B cell (primary cell): ENCODE measurements at regions of chr17 and their contacts with region 1.

Region 1: DNA sequence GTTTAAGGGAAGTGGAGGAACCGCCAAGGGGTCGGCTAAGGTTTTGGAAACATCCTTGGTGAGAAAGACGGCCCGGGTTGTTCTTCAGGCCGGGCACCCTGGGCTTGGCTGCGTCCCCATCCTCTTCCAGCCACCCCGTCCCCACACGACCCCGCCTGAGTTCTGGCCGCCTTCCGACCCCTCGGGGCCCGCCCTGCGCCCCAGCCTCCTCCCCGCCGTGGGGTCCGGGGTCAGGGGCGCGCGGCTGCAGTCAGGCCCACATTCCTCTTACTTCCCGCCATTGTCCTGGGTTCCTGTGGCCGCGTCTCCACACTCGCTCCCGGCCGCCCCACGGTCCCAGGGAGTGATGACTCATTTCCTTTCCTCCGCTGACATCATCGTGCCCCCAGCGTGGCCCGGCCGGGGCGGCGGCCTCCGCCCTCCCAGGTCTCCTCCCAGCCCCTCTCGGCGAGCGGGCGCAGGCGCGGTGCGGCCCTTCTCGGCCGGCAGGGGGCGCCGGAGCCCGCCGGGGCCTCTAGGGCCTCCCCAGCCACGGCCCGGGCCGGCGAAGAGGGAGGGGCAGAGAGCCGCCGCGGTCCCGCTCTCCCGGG is 59.6 kb downstream of the WSB1 start:
- DNase-seq: peak; percentile 90
- ATAC-seq: peak; percentile 82
- H3K4me3 ChIP-seq: peak overlapping the region in 4 of 5 experiments; percentile 62 to 78 (median 72)
- H3K4me3 Mint-ChIP-seq: peak overlapping the region; percentile 73
- H3K27ac ChIP-seq: peak overlapping the region; percentile 60 to 89
- H3K27ac Mint-ChIP-seq: peak overlapping the region; percentile 91
- H3K4me1 ChIP-seq: peaks cover 13 to 19% of the 10 kb centered on the region in 2 donors
- H3K4me1 Mint-ChIP-seq: peaks cover 19% of the 10 kb centered on the region
- H3K27me3 ChIP-seq: no peaks in the 10 kb centered on the region
- H3K27me3 Mint-ChIP-seq: no peaks in the 10 kb centered on the region
- CTCF ChIP-seq: peak; percentile 90

Region 2: GRCh38 chr17:27293898-27294688 is 59.5 kb before region 1 on chr17 and contains the start of gene WSB1:
- CTCF ChIA-PET with region 1: interaction called, 5 read pairs
- POLR2A ChIA-PET with region 1: interaction called, 3 read pairs
- intact Hi-C with region 1: loop called (anchors 1 kb)
- DNase-seq: peak; percentile 97
- ATAC-seq: peak; percentile 86
- H3K4me3 ChIP-seq: peak within 1 kb of the TSS; percentile 89 to 100 (median 96)
- H3K4me3 Mint-ChIP-seq: peak within 1 kb of the TSS; percentile 89
- H3K27ac ChIP-seq: peak within 1 kb of the TSS; percentile 99
- H3K27ac Mint-ChIP-seq: peak within 1 kb of the TSS; percentile 99
- H3K4me1 ChIP-seq: peaks cover 37 to 39% of the 10 kb centered on the region in 2 donors
- H3K4me1 Mint-ChIP-seq: peaks cover 45% of the 10 kb centered on the region
- H3K27me3 ChIP-seq: no peaks in the 10 kb centered on the region
- H3K27me3 Mint-ChIP-seq: no peaks in the 10 kb centered on the region
- CTCF ChIP-seq: no peak
- total RNA-seq, gene WSB1: 215 and 217 TPM in 2 replicates

Region 3: DNA sequence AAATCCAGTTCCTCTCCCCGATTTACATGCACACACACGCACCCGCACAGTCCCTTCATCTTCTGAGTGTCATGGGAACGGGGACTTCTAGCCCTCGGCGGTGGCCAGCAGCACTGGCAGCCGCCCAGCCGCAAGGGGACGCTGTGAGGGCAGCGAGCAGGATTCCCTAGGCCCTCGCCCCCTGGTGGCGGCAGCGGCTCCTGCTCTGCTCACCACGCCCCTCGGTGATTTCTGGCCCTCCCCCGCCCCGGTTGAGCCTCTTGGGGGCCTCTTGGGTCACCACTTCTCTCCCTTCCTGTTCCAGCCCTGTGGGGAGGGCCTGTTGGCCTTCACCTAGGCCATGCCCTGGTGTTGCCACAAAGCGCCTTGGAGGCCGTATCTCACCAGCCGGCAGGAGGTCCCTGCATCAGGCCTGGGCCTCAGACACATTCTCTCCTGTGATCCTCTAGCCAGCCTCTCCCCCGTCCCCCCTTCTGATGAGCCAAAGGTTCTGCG is 27.5 kb after region 1 on chr17:
- CTCF ChIA-PET with region 1: interaction called, 5 read pairs
- POLR2A ChIA-PET with region 1: no interaction called
- intact Hi-C with region 1: loop called (anchors 1 kb)
- DNase-seq: peak; percentile 79
- ATAC-seq: peak; percentile 95
- H3K4me3 ChIP-seq: no peak overlapping the region
- H3K4me3 Mint-ChIP-seq: no peak overlapping the region
- H3K27ac ChIP-seq: no peak overlapping the region
- H3K27ac Mint-ChIP-seq: no peak overlapping the region
- H3K4me1 ChIP-seq: peaks cover 0 to 4% of the 10 kb centered on the region in 2 donors
- H3K4me1 Mint-ChIP-seq: peaks cover 6% of the 10 kb centered on the region
- H3K27me3 ChIP-seq: peaks cover 0 to 20% (median 3%) of the 10 kb centered on the region in 4 experiments
- H3K27me3 Mint-ChIP-seq: peaks cover 18% of the 10 kb centered on the region
- CTCF ChIP-seq: peak; percentile 97

Region 4: DNA sequence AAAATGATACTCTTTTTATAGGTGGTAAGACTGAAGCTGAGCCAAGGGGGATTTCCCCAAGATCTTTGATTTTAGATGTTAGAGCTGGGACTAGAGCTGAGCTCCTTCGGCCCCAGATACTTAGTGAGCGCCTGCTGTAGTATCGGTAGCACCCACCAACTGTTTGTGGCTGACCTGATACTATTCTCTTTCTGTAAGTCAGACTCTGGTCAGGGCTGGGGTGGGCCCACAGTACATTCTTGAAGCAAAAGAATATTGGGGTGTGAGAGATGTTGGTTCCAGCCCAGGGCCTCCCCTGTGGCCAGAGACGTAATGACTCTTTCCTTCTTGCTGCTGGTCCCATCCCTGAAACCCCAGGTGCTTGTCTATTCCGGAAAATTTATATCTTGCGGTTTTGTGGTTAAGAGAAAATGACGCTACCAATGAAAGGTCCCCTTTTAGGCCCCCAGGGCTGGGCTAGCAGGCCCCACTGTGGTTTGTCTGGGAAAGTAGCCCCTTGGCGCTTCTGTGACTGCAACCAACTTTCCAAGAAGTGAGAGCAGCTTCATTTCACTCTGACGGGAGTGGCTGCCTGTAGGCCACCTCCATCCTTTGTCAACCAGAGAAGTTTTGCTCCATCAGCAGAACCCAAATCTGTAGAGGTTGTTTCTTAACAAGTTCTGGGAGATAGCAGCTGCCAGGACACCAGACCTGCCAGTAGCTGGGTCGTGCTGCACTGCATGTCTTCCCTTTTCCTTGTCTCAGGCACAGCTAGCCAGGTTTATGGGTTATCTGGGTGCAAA is 191.0 kb after region 1 on chr17:
- CTCF ChIA-PET with region 1: no interaction called
- POLR2A ChIA-PET with region 1: no interaction called
- intact Hi-C with region 1: no loop called
- DNase-seq: peak; percentile 70
- ATAC-seq: peak; percentile 84
- H3K4me3 ChIP-seq: no peak overlapping the region
- H3K4me3 Mint-ChIP-seq: peak overlapping the region; percentile 75
- H3K27ac ChIP-seq: peak overlapping the region; percentile 6 to 28
- H3K27ac Mint-ChIP-seq: peak overlapping the region; percentile 87
- H3K4me1 ChIP-seq: peaks cover 58 to 65% of the 10 kb centered on the region in 2 donors
- H3K4me1 Mint-ChIP-seq: peaks cover 72% of the 10 kb centered on the region
- H3K27me3 ChIP-seq: no peaks in the 10 kb centered on the region
- H3K27me3 Mint-ChIP-seq: no peaks in the 10 kb centered on the region
- CTCF ChIP-seq: no peak

Region 5: DNA sequence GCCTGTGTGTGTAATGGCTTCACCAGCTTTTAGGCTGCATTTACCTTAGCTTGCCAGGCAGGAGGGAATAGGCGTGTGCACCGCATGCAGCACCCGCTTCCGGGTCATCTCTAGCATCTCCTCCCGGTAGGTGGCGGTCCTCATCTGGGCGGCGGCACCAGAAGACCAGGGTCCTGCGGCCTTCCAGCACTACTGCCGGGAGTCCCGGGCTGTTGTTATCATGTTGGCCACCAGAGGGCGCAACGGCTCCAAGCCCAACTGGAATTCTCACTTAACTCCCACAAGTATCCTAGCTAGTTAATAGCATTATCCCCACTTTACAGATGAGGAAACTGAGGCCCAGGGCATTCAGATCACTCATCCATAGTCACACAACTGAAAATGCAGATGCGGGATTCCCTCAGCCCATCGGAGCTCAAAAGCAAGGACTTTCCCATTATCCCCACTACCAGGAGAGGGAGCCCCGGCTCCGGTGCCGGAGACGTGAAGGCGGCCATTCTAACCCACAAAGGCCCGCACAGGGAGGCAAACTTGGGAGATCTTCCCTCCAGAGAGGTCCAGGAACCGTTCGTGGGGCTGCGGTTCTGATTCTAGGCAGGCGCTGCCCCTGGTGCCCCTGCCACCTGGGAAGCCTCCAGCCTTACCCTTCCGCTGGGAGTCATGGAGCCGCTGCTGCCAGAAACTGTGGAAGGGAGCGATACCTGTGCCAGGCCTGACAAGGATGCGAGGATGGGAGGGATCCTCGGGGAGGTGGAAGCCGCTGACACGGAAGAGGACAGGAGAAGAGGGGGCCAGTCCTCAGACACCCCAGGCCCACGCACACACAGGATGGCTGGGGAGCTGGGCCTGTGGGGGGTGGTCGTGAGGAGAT is 301.3 kb after region 1 on chr17:
- CTCF ChIA-PET with region 1: interaction called, 6 read pairs
- POLR2A ChIA-PET with region 1: no interaction called
- intact Hi-C with region 1: loop called (anchors 5 kb)
- DNase-seq: peak; percentile 79
- ATAC-seq: peak; percentile 88
- H3K4me3 ChIP-seq: no peak overlapping the region
- H3K4me3 Mint-ChIP-seq: no peak overlapping the region
- H3K27ac ChIP-seq: no peak overlapping the region
- H3K27ac Mint-ChIP-seq: no peak overlapping the region
- H3K4me1 ChIP-seq: peaks cover 3 to 5% of the 10 kb centered on the region in 2 donors
- H3K4me1 Mint-ChIP-seq: peaks cover 6% of the 10 kb centered on the region
- H3K27me3 ChIP-seq: no peaks in the 10 kb centered on the region
- H3K27me3 Mint-ChIP-seq: no peaks in the 10 kb centered on the region
- CTCF ChIP-seq: peak; percentile 96